Activated naive CD4-positive, alpha-beta T cell treated with anti-CD3 and anti-CD28 coated beads, Interleukin-2, amount 10 ng/mL, durations not matched to agents 7 days and 5 days (primary cell): ENCODE measurements at regions of chr21 and their contacts with region 1.

Region 1: DNA sequence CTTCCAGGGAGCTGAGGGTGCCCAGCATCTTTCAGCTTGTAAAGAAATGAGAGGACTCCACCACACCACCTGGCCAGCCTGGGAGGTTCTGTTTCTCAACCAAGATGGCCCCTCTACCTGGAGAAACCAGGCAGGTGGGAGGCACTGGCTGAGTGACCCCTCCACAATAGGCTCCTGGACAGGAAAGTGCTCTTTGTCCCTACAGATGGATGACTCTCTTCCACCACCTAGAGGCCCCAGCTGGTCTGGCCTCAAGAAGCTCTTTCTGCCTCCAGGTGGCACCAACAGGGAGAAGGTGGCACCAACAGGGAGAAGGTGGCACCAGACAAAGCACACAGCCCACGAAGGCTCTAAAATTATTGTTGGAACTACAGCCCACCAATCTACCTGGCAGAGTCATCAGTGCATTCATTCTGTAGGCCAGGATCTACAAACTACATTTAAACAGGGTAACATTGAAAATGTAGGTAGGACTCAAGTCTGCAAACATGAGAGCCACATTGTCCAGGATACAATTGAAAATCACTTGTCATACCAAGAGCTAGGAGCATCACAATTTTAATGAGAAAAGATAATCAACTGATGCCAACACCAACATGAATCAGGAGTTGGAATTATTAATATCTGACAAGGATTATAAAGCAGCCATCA is 14.4 kb downstream of the TMPRSS3 start:
- DNase-seq: peak; percentile 67
- H3K4me3 Mint-ChIP-seq: no peak overlapping the region
- H3K27ac Mint-ChIP-seq: no peak overlapping the region
- H3K4me1 Mint-ChIP-seq: peaks cover 22% of the 10 kb centered on the region
- H3K27me3 Mint-ChIP-seq: peaks cover 7% of the 10 kb centered on the region

Region 2: DNA sequence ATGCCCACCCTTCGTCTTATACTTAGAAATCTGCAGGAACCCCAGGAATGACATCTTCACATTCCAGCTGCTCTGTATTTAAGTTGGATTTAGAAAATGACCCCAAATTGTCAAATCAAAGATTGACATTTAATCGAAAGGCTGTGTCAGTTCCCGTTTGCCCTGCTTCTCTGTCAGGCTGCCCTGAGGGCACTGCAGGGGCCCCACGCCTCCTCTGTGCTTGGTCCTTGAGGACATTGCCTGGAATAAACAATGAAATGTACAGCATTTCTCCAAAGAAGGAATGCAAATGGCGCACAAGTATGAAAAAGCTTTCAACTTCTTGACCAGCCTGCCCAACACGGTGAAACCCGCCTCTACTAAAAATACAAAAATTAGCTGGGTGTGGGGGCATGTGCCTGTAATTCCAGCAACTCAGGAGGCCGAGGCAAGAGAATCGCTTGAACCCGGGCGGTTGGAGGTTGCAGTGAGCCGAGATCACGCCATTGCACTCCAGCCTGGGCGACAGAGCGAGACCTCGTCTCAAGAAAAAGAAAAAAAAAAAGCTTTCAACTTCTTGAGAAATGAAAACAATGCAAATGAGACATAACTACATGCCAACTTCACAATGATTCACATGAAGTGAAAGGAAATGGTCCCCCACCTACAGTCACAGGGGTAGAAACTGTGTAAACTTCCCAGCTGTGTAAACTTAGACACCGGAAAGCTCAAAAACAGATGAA is 11.4 kb after region 1 on chr21:
- CTCF ChIA-PET with region 1: interaction called, 13 read pairs
- DNase-seq: no peak
- H3K4me3 Mint-ChIP-seq: peak overlapping the region; percentile 2
- H3K27ac Mint-ChIP-seq: peak overlapping the region; percentile 76
- H3K4me1 Mint-ChIP-seq: peaks cover 72% of the 10 kb centered on the region
- H3K27me3 Mint-ChIP-seq: peaks cover 9% of the 10 kb centered on the region

Region 3: DNA sequence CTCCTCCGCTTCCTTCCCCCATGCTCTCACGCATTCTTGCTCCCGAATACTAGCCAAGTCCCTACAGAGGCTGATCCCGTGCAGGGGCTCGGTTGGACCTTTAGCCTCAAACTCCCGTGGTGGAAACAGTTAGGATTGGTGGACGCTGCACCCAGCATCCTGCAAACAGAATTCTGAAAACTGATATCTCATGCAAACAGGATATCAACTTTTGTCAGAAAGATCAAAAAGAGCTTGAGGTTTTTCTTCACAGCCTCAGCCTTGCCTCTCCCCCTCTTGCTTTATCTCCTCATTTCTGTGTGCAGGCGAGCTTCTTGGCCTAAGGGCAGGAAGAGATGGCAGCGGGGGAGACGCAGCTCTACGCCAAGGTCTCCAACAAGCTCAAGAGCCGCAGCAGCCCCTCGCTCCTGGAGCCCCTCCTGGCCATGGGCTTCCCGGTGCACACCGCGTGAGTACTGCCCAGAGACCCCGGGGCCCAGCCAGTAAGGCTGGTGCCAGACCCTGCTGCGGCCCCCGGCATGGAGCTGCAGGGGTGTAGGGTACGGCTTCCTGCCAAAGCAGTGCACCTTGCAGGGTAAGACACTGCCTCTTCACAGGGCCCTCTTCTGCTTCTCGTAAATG is 22.3 kb after region 1 on chr21 and contains the start of gene UBASH3A:
- CTCF ChIA-PET with region 1: interaction called, 25 read pairs
- DNase-seq: peak; percentile 76
- H3K4me3 Mint-ChIP-seq: peak within 1 kb of the TSS; percentile 98
- H3K27ac Mint-ChIP-seq: peak within 1 kb of the TSS; percentile 87
- H3K4me1 Mint-ChIP-seq: peaks cover 59% of the 10 kb centered on the region
- H3K27me3 Mint-ChIP-seq: no peaks in the 10 kb centered on the region

Region 4: DNA sequence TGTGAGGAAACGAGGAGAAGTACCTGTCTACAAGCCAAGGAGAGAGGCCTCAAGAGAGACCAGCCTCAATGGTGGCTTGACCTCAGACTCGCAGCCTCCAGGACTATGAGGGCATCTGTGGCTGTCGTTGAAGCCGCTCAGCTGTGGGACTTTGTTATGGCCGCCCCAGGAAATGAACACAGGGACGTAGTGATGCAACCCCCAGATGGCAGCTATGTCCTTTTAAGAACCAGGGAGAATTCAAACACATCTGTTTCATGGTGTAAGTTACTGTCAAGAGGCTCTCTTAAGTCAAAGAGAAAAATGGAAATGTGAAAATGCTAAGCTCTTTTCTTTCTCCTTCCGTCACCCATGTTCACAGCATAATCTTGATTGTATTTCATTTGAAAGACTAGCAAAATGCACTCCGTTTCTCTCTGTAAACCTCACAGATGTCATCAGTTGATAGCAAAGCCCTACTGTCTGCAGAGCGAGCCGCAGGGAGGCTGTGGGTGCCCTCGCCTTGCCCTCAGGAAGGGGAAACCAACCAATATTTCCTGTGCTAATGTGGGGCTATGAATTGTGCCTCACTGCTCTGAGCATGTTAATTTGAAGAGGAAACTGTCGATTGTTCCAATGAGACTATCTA is 43.6 kb after region 1 on chr21:
- CTCF ChIA-PET with region 1: interaction called, 18 read pairs
- DNase-seq: peak; percentile 84
- H3K4me3 Mint-ChIP-seq: peak overlapping the region; percentile 55
- H3K27ac Mint-ChIP-seq: peak overlapping the region; percentile 91
- H3K4me1 Mint-ChIP-seq: peaks cover 73% of the 10 kb centered on the region
- H3K27me3 Mint-ChIP-seq: no peaks in the 10 kb centered on the region